Calu3 (cell line): ENCODE measurements at regions of chr10 and their contacts with region 1.

Region 1: GRCh38 chr10:13414894-13415293 is 66.8 kb upstream of the SEPHS1 start:
- DNase-seq: peak; percentile 54
- H3K4me3 Mint-ChIP-seq: no peak overlapping the region
- H3K27ac Mint-ChIP-seq: no peak overlapping the region
- H3K4me1 Mint-ChIP-seq: no peaks in the 10 kb centered on the region
- H3K27me3 Mint-ChIP-seq: peaks cover 45% of the 10 kb centered on the region
- CTCF ChIP-seq: peak; percentile 20

Region 2: DNA sequence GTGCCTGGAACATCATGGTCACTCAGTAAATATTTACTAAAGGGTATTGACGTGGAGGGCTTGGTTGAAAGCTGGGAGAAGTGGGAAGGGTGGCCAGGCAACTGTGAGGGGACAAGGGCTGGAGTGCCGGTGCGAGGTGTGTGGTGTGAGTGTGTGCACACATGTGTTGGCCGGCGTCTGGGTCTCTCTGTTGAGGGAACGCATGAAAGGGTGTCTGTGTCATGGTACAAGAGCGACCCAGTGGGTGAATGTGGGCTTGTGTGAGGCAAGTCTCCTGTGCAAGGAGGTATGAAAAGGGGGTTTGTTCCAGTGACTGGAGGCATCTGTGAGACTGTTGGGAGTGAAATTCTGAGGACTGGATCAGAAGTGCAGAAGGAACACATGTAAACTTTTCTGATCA is 151.3 kb before region 1 on chr10:
- CTCF ChIA-PET with region 1: no interaction called
- intact Hi-C with region 1: no loop called
- DNase-seq: no peak
- H3K4me3 Mint-ChIP-seq: no peak overlapping the region
- H3K27ac Mint-ChIP-seq: no peak overlapping the region
- H3K4me1 Mint-ChIP-seq: no peaks in the 10 kb centered on the region
- H3K27me3 Mint-ChIP-seq: peaks cover 18% of the 10 kb centered on the region
- CTCF ChIP-seq: no peak

Region 3: GRCh38 chr10:13536674-13537366 is 121.9 kb after region 1 on chr10:
- CTCF ChIA-PET with region 1: interaction called, 7 read pairs
- intact Hi-C with region 1: loop called (anchors 5 kb)
- DNase-seq: peak; percentile 74
- H3K4me3 Mint-ChIP-seq: no peak overlapping the region
- H3K27ac Mint-ChIP-seq: no peak overlapping the region
- H3K4me1 Mint-ChIP-seq: no peaks in the 10 kb centered on the region
- H3K27me3 Mint-ChIP-seq: peaks cover 62% of the 10 kb centered on the region
- CTCF ChIP-seq: peak; percentile 66

Region 4: DNA sequence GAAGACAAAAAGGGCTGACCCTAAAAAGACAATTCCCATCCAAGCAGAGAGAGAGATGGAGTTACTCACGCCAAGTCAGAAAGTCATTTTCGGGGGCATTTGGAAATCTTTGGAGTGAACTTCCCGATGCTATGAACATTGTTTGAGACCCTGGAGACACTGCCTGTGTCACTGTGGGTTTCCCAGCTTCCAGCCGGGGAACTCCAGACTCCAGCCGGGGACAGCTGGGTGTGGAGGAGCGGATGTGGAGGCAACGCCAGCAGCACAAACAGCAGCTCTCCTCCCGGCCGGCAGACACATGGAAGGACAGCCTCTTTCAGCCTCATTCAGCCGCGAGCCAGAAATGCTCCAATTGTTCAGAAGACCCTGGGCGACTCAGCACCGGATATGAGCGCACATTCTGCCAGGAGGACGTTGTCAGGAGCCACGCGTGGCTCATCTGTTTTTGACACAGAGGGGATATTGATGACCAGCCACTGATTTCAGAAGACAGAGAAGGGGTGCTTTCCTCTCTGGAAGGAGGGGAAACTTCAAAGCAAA is 269.4 kb after region 1 on chr10:
- CTCF ChIA-PET with region 1: no interaction called
- intact Hi-C with region 1: no loop called
- DNase-seq: no peak
- H3K4me3 Mint-ChIP-seq: no peak overlapping the region
- H3K27ac Mint-ChIP-seq: no peak overlapping the region
- H3K4me1 Mint-ChIP-seq: peaks cover 9% of the 10 kb centered on the region
- H3K27me3 Mint-ChIP-seq: no peaks in the 10 kb centered on the region
- CTCF ChIP-seq: no peak